HCT116 (cell line): ENCODE measurements at regions of chr9 and their contacts with region 1.

Region 1: DNA sequence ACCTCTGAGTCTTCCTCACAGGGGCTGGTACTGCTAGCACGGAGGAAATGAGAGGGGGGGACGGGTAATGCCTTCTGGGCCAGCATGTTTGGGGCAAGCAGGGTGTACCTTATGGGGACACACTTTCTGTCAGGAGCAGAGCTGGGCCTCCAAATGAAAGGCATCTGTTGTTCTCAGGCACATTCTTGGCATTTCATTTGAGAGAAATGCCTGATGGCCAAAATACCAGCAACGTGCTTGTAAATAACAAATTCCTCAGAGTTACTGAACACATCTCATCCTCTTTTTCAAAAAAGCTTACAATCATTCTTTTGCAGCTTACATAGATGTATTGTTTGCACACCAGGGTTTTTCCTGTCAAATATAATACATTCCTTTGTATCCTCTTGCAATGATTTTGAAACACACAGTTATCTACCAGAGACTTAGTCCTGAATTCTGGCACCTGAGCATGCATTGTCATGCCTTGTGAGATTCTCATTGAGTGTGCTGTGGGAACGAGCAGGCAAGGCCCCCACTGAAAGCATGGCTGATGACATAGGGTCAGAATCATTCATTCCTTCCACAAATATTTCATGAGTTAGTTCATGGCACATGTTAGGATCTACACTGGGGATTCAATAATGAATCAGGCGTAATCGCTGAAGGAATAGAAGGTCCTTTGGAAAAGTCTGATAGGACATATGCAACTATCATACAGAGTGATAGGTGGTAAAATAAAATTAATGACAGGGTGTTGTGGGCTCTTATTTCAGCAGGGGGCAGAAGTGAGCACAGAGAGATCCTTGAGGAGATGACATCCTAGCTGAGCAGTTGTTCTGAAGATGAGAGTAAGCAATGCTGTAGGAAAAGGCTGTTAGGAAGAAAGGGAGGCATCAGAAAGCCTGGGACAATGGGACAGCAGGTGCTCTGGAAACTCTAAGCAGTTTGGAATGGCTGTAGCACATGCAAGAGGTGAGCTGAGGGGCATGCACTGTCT is 260.9 kb upstream of the TUT7 start:
- DNase-seq: no peak
- ATAC-seq: peak; percentile 76
- H3K4me3 ChIP-seq: no peak overlapping the region
- H3K27ac ChIP-seq: no peak overlapping the region
- H3K4me1 ChIP-seq: no peaks in the 10 kb centered on the region
- H3K27me3 ChIP-seq: peaks cover 10% of the 10 kb centered on the region
- CTCF ChIP-seq: peak; percentile 8 to 63 (median 54); a peak in 5 of 6 replicates
- POLR2A ChIP-seq: no peak
- RAD21 ChIP-seq: peak; percentile 39

Region 2: GRCh38 chr9:86508208-86508903 is 106.8 kb before region 1 on chr9:
- CTCF ChIA-PET with region 1: no interaction called
- POLR2A ChIA-PET with region 1: no interaction called
- RAD21 ChIA-PET with region 1: no interaction called
- intact Hi-C with region 1: no loop called
- DNase-seq: no peak
- ATAC-seq: no peak
- H3K4me3 ChIP-seq: no peak overlapping the region
- H3K27ac ChIP-seq: no peak overlapping the region
- H3K4me1 ChIP-seq: no peaks in the 10 kb centered on the region
- H3K27me3 ChIP-seq: peaks cover 33% of the 10 kb centered on the region
- CTCF ChIP-seq: no peak
- POLR2A ChIP-seq: no peak
- RAD21 ChIP-seq: no peak

Region 3: GRCh38 chr9:86795823-86796553 is 180.8 kb after region 1 on chr9:
- CTCF ChIA-PET with region 1: no interaction called
- POLR2A ChIA-PET with region 1: no interaction called
- RAD21 ChIA-PET with region 1: no interaction called
- intact Hi-C with region 1: no loop called
- DNase-seq: no peak
- ATAC-seq: no peak
- H3K4me3 ChIP-seq: no peak overlapping the region
- H3K27ac ChIP-seq: no peak overlapping the region
- H3K4me1 ChIP-seq: peaks cover 4 to 10% of the 10 kb centered on the region in 2 experiments; a peak in 3 of 4 replicates
- H3K27me3 ChIP-seq: peaks cover 16% of the 10 kb centered on the region; the same call in 1 of the 2 replicates
- CTCF ChIP-seq: 0 out of 6 replicates have a peak, but pooled peaks of 1 of the 3 experiments have one; percentile 0
- POLR2A ChIP-seq: no peak
- RAD21 ChIP-seq: no peak

Region 4: DNA sequence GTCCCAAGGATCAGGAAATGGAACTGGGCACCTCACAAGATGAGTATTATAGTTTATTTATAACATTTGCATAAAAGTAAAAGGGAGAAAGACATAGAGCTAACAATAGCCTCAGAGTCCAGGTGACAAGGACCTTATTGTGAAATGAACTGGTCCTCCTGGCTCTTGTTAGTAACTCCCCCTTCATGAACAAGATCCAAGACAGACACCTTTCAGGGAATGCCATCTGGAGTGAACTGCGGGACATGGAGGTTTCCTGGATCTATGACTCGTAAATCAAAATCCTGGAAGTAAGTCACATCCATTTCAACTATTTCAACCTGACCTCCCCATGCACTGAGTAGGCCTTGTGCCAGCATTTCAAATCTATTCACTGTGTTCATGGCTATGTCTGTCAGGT is 461.7 kb after region 1 on chr9:
- CTCF ChIA-PET with region 1: no interaction called
- POLR2A ChIA-PET with region 1: no interaction called
- RAD21 ChIA-PET with region 1: no interaction called
- intact Hi-C with region 1: loop called (anchors 5 kb)
- DNase-seq: no peak
- ATAC-seq: no peak
- H3K4me3 ChIP-seq: no peak overlapping the region
- H3K27ac ChIP-seq: no peak overlapping the region
- H3K4me1 ChIP-seq: no peaks in the 10 kb centered on the region
- H3K27me3 ChIP-seq: peaks cover 5% of the 10 kb centered on the region; the same call in 1 of the 2 replicates
- CTCF ChIP-seq: no peak
- POLR2A ChIP-seq: no peak
- RAD21 ChIP-seq: no peak

Region 5: GRCh38 chr9:87233899-87234455 is 618.8 kb after region 1 on chr9:
- CTCF ChIA-PET with region 1: no interaction called
- POLR2A ChIA-PET with region 1: no interaction called
- RAD21 ChIA-PET with region 1: no interaction called
- intact Hi-C with region 1: no loop called
- DNase-seq: no peak
- ATAC-seq: no peak
- H3K4me3 ChIP-seq: no peak overlapping the region
- H3K27ac ChIP-seq: no peak overlapping the region
- H3K4me1 ChIP-seq: no peaks in the 10 kb centered on the region
- H3K27me3 ChIP-seq: peaks cover 35% of the 10 kb centered on the region
- CTCF ChIP-seq: no peak
- POLR2A ChIP-seq: no peak
- RAD21 ChIP-seq: no peak